ENCODE measurements at regions of chr5 and their contacts with region 1.

Region 1: DNA sequence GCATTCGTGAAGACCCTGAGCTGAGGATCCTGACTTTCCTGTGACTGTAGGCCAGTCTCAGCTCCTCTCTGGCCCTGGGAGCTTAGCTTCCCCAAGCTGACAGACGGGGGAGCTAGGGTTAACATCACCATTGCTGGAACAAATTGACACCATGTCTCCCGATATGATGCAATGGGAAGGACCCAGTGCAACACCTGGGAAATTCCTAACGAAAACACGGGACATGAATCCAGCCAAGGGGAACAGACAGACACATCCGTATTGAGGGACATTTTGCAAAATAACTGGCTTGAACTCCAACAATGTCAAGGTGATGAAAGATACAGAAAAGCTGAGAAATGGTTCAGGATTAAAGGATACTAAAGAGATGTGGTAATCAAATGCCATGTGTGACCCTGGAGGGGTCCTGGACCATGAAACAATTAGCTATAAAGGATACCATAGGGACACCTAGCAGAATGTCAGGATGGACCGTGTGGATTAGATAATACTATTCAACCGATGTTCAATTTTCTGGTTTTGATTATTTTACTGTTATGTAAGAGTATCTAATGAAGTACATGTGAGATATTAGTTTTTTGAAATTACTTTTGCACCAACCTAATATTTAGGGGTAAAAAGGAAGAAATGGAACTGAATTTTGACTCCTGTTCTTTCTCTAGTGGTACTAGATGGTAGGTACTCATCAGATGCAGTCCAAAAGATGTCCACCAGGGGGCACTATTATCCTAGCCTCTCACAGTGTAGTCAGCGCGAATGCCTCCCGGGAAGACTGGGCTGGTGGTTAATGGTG is 52.7 kb downstream of the NDST1 start:
- DNase-seq: peak in 4 of 5 donors; percentile 81 to 86 (median 84)
- ATAC-seq: peak; percentile 74 to 90 (median 86)
- H3K4me3 ChIP-seq: no peak overlapping the region
- H3K27ac ChIP-seq: no peak overlapping the region
- H3K4me1 ChIP-seq: peaks cover 0 to 20% (median 4%) of the 10 kb centered on the region in 12 donors
- H3K27me3 ChIP-seq: no peaks in the 10 kb centered on the region
- CTCF ChIP-seq: peak; percentile 83 to 98 (median 96)
- POLR2A ChIP-seq: no peak

Region 2: GRCh38 chr5:149301747-149302380 is 1258.7 kb before region 1 on chr5:
- intact Hi-C with region 1: no loop called
- DNase-seq: no peak
- ATAC-seq: no peak
- H3K4me3 ChIP-seq: no peak overlapping the region
- H3K27ac ChIP-seq: peak overlapping the region in 8 of 12 donors; percentile 20 to 86 (median 76)
- H3K4me1 ChIP-seq: peaks cover 1 to 84% (median 53%) of the 10 kb centered on the region in 12 donors
- H3K27me3 ChIP-seq: no peaks in the 10 kb centered on the region
- CTCF ChIP-seq: no peak
- POLR2A ChIP-seq: no peak

Region 3: GRCh38 chr5:150589871-150590601 is 29.4 kb after region 1 on chr5:
- intact Hi-C with region 1: loop called in 1 of 10 experiments (anchors 2 kb)
- DNase-seq: peak; percentile 77 to 84 (median 84)
- ATAC-seq: peak; percentile 72 to 88 (median 76)
- H3K4me3 ChIP-seq: no peak overlapping the region
- H3K27ac ChIP-seq: peak overlapping the region in 10 of 12 donors; percentile 52 to 83 (median 74)
- H3K4me1 ChIP-seq: peaks cover 8 to 63% (median 55%) of the 10 kb centered on the region in 12 donors
- H3K27me3 ChIP-seq: no peaks in the 10 kb centered on the region
- CTCF ChIP-seq: peak; percentile 64 to 90 (median 80)
- POLR2A ChIP-seq: no peak

Region 4: GRCh38 chr5:150672237-150672883 is 111.8 kb after region 1 on chr5:
- intact Hi-C with region 1: loop called in 1 of 10 experiments (anchors 5 kb)
- DNase-seq: peak; percentile 59 to 75 (median 68)
- ATAC-seq: peak; percentile 7 to 73 (median 42)
- H3K4me3 ChIP-seq: peak overlapping the region; percentile 46 to 73 (median 56)
- H3K27ac ChIP-seq: peak overlapping the region in 9 of 12 donors; percentile 23 to 90 (median 74)
- H3K4me1 ChIP-seq: peaks cover 6 to 48% (median 33%) of the 10 kb centered on the region in 12 donors
- H3K27me3 ChIP-seq: peaks cover 0 to 10% (median 0%) of the 10 kb centered on the region in 9 donors
- CTCF ChIP-seq: no peak
- POLR2A ChIP-seq: no peak

Region 5: GRCh38 chr5:150700594-150701293 is 140.1 kb after region 1 on chr5 and contains the start of gene RBM22:
- intact Hi-C with region 1: loop called in 6 of 10 experiments (anchors 2 to 5 kb)
- DNase-seq: peak; percentile 93 to 97 (median 95)
- ATAC-seq: peak; percentile 97 to 100 (median 99)
- H3K4me3 ChIP-seq: peak within 1 kb of the TSS; percentile 73 to 99 (median 94)
- H3K27ac ChIP-seq: peak within 1 kb of the TSS; percentile 92 to 99 (median 98)
- H3K4me1 ChIP-seq: peaks cover 0 to 24% (median 16%) of the 10 kb centered on the region in 12 donors
- H3K27me3 ChIP-seq: no peaks in the 10 kb centered on the region
- CTCF ChIP-seq: peak; percentile 43 to 81 (median 62)
- POLR2A ChIP-seq: peak in 1 of 2 donors; percentile 87
- total RNA-seq, gene RBM22: 23.5 to 42.3 (median 28.0) TPM

Region 6: GRCh38 chr5:150710165-150710564 is 149.6 kb after region 1 on chr5:
- intact Hi-C with region 1: loop called in 1 of 10 experiments (anchors 2 kb)
- DNase-seq: no peak
- ATAC-seq: no peak
- H3K4me3 ChIP-seq: no peak overlapping the region
- H3K27ac ChIP-seq: no peak overlapping the region
- H3K4me1 ChIP-seq: peaks cover 0 to 8% (median 0%) of the 10 kb centered on the region in 12 donors
- H3K27me3 ChIP-seq: no peaks in the 10 kb centered on the region
- CTCF ChIP-seq: peak in 11 of 12 donors; percentile 9 to 50 (median 28)
- POLR2A ChIP-seq: no peak